Tibial artery (tissue), 4 donors: ENCODE measurements at regions of chr10 and their contacts with region 1.

Region 1: DNA sequence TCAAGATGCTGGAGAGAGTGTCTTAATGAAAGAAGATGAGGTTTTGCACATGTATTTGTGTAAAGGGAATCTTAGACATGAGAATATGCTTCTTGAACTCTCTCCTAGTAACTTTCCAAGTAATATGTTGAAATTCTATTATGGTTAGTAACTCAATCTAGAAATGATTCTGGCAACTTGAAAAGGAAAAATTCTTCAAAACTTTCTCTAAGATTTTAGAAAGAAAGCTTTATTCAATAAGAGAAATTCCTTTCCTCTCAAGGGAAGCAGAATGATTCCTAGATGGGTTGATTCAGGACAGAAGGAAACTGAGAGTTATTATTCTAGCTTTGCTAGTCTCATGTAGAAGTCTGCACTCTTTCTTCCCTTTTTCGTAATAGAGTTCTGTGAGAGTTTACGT is 364.3 kb upstream of the PLXDC2 start:
- DNase-seq: no peak
- H3K4me3 ChIP-seq: no peak overlapping the region
- H3K27ac ChIP-seq: no peak overlapping the region
- H3K4me1 ChIP-seq: no peaks in the 10 kb centered on the region
- H3K27me3 ChIP-seq: no peaks in the 10 kb centered on the region
- CTCF ChIP-seq: no peak

Region 2: GRCh38 chr10:19469521-19469920 is 17.6 kb after region 1 on chr10:
- intact Hi-C with region 1: loop called (anchors 1 kb)
- DNase-seq: no peak
- H3K4me3 ChIP-seq: no peak overlapping the region
- H3K27ac ChIP-seq: no peak overlapping the region
- H3K4me1 ChIP-seq: peaks cover 0 to 19% (median 1%) of the 10 kb centered on the region in 4 donors
- H3K27me3 ChIP-seq: no peaks in the 10 kb centered on the region
- CTCF ChIP-seq: no peak